HepG2 (cell line): ENCODE measurements at regions of chr18 and their contacts with region 1.

Region 1: DNA sequence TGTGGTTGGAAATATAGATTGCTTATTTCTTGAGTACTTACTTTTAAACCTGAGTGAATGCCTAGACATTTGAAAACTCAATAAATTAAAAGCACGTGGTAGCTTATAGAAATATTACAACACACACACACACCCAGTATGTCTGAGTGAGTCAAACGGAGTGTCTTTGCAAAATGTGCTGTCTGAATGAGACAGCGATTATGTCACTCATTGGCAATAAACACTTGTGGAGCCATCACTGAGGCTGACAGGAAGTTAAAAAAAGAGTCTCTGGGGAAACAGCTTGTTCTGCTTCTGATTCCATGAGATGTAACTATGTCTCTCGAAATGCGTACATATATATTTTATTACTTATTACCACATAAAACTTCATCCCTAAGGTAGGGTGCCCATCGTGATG is 22.3 kb upstream of the VPS4B start:
- DNase-seq: no peak
- ATAC-seq: no peak
- H3K4me3 ChIP-seq: no peak overlapping the region
- H3K27ac ChIP-seq: no peak overlapping the region
- H3K4me1 ChIP-seq: no peaks in the 10 kb centered on the region
- H3K27me3 ChIP-seq: no peaks in the 10 kb centered on the region
- CTCF ChIP-seq: no peak
- EP300 ChIP-seq: no peak
- POLR2A ChIP-seq: no peak
- RAD21 ChIP-seq: no peak

Region 2: GRCh38 chr18:63131106-63131958 is 313.2 kb before region 1 on chr18:
- CTCF ChIA-PET with region 1: interaction called, 13 read pairs
- POLR2A ChIA-PET with region 1: no interaction called
- in situ Hi-C with region 1: loop called (anchors 10 kb)
- intact Hi-C with region 1: loop called (anchors 1 kb)
- DNase-seq: peak; percentile 16
- ATAC-seq: peak; percentile 70
- H3K4me3 ChIP-seq: no peak overlapping the region
- H3K27ac ChIP-seq: no peak overlapping the region
- H3K4me1 ChIP-seq: peaks cover 10% of the 10 kb centered on the region
- H3K27me3 ChIP-seq: peaks cover 0 to 7% of the 10 kb centered on the region in 2 experiments; a peak in 2 of 5 replicates
- CTCF ChIP-seq: peak; percentile 50
- EP300 ChIP-seq: no peak
- POLR2A ChIP-seq: no peak
- RAD21 ChIP-seq: no peak

Region 3: GRCh38 chr18:63356272-63356896 is 88.2 kb before region 1 on chr18:
- CTCF ChIA-PET with region 1: no interaction called
- POLR2A ChIA-PET with region 1: no interaction called
- in situ Hi-C with region 1: no loop called
- intact Hi-C with region 1: no loop called
- DNase-seq: no peak
- ATAC-seq: no peak
- H3K4me3 ChIP-seq: no peak overlapping the region
- H3K27ac ChIP-seq: no peak overlapping the region
- H3K4me1 ChIP-seq: no peaks in the 10 kb centered on the region
- H3K27me3 ChIP-seq: no peaks in the 10 kb centered on the region
- CTCF ChIP-seq: no peak
- EP300 ChIP-seq: no peak
- POLR2A ChIP-seq: no peak
- RAD21 ChIP-seq: no peak